ENCODE measurements at regions of chr2 and their contacts with region 1.

Region 1: GRCh38 chr2:68837164-68837860 is 33.9 kb downstream of the BMP10 start:
- DNase-seq: peak; percentile 84
- H3K4me3 Mint-ChIP-seq: no peak overlapping the region
- H3K27ac Mint-ChIP-seq: no peak overlapping the region
- H3K4me1 Mint-ChIP-seq: peaks cover 4% of the 10 kb centered on the region
- H3K27me3 Mint-ChIP-seq: no peaks in the 10 kb centered on the region
- CTCF ChIP-seq: peak; percentile 68

Region 2: DNA sequence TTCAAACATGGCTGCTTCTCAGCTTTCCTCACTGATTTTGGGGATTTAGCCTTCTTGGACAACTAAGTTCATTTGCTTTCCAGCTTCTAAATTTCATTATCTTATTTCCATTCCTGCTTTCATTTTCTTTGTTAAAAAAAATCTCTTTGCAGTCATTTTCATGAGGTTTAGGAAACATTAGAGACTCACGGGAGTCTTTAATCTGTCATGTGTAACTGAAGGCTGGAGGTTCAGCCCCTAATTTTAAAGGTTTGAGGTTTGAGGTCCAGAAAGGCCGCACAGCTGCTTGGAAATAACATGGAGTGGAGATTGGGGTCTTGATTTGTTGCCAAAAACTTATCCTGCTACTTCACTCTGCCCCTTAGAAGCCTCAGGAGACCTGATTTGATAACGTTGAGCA is 163.7 kb before region 1 on chr2:
- CTCF ChIA-PET with region 1: no interaction called
- POLR2A ChIA-PET with region 1: no interaction called
- intact Hi-C with region 1: no loop called
- DNase-seq: no peak
- H3K4me3 Mint-ChIP-seq: no peak overlapping the region
- H3K27ac Mint-ChIP-seq: no peak overlapping the region
- H3K4me1 Mint-ChIP-seq: no peaks in the 10 kb centered on the region
- H3K27me3 Mint-ChIP-seq: peaks cover 33% of the 10 kb centered on the region
- CTCF ChIP-seq: no peak

Region 3: DNA sequence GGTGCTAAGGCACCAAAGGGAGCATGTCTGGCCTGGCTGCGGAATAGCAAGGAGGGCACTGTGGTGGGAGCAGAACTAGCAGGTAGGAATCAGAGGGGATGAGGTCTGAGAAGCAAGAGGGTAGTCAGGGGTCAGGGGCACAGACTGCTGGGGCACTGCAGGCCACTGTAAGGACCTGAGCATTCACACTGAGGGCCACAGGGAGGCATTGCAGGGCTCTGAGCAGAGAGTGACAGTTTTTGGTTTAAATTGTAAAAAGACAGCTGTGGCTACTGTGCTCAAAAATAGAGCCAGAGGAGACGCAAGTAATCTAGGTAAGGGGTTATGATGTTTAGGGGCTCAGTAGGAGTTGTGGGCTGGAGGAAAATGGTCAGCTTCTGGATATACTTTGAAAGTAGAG is 61.2 kb before region 1 on chr2:
- CTCF ChIA-PET with region 1: interaction called, 3 read pairs
- POLR2A ChIA-PET with region 1: no interaction called
- intact Hi-C with region 1: loop called (anchors 1 kb)
- DNase-seq: no peak
- H3K4me3 Mint-ChIP-seq: no peak overlapping the region
- H3K27ac Mint-ChIP-seq: no peak overlapping the region
- H3K4me1 Mint-ChIP-seq: no peaks in the 10 kb centered on the region
- H3K27me3 Mint-ChIP-seq: no peaks in the 10 kb centered on the region
- CTCF ChIP-seq: no peak

Region 4: DNA sequence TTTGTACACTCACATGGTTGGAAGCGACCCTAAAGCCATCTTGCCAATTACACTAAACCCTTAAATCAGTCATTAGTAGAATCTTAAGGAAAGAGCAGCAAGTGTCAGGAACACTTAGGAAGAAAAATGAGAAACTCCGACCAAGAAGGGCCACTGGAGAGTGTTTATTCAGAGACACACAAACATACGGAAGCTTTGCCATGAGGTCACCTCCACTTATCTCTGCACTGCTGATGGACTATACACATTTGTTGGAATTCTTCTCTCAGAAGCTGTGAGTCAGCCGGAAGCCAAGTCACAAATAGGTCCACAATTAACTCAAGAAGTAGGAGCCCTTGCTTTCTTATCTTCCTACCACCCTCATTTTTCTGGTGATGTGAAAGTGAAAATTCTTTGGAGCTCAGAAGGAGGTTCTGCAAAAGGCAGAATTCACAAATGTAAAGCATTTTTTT is 12.3 kb after region 1 on chr2:
- CTCF ChIA-PET with region 1: interaction called, 12 read pairs
- POLR2A ChIA-PET with region 1: no interaction called
- intact Hi-C with region 1: no loop called
- DNase-seq: no peak
- H3K4me3 Mint-ChIP-seq: no peak overlapping the region
- H3K27ac Mint-ChIP-seq: no peak overlapping the region
- H3K4me1 Mint-ChIP-seq: no peaks in the 10 kb centered on the region
- H3K27me3 Mint-ChIP-seq: peaks cover 24% of the 10 kb centered on the region
- CTCF ChIP-seq: no peak